Natural killer cell (primary cell): ENCODE measurements at regions of chr6 and their contacts with region 1.

Region 1: DNA sequence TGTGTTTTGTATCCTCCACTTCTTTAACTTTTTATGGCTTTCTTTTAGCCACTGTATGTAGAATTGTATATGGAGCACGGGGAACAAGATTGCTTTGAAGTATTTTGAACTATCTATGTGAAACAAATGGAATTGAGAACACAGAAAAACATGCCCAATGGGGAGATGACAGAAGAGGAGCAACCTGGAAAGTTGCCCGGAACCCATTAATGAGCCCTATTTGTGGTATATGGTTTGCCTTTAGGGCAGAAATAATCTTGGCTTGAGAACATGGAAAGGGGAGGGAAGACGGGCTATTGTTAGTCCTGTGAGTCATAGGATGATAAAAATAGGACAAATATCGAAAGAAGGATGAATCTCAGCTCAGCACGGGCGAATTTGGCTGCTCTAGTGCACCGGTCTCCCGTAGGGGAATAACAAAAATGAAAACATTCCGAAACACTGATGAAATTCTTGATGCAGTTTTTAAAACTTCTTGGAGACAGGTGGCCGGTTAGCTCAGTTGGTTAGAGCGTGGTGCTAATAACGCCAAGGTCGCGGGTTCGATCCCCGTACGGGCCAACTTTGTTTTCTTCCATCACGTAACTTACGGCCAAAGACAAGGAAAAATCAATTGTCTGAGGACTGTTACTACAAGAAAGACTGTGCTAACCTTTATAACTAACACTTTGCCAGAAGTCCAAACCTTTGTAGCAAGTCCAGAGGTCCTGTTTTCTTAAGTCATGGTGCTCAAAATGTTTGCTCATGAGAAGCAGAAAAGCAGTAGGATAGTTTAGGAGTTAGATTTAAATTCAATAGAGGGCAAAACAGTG is 15.7 kb downstream of the HMGN4 start:
- DNase-seq: peak; percentile 77 to 91
- ATAC-seq: peak; percentile 51 to 62 (median 61)
- H3K4me3 ChIP-seq: peak overlapping the region; percentile 71
- H3K4me3 Mint-ChIP-seq: no peak overlapping the region
- H3K27ac ChIP-seq: peak overlapping the region; percentile 65
- H3K27ac Mint-ChIP-seq: no peak overlapping the region
- H3K4me1 ChIP-seq: peaks cover 23% of the 10 kb centered on the region
- H3K4me1 Mint-ChIP-seq: peaks cover 24 to 25% of the 10 kb centered on the region in 2 donors
- H3K27me3 ChIP-seq: no peaks in the 10 kb centered on the region
- H3K27me3 Mint-ChIP-seq: no peaks in the 10 kb centered on the region
- CTCF ChIP-seq: no peak

Region 2: GRCh38 chr6:25981568-25982263 is 572.1 kb before region 1 on chr6:
- intact Hi-C with region 1: no loop called
- DNase-seq: no peak
- ATAC-seq: no peak
- H3K4me3 ChIP-seq: no peak overlapping the region
- H3K4me3 Mint-ChIP-seq: no peak overlapping the region
- H3K27ac ChIP-seq: no peak overlapping the region
- H3K27ac Mint-ChIP-seq: peak overlapping the region; percentile 18 to 72
- H3K4me1 ChIP-seq: no peaks in the 10 kb centered on the region
- H3K4me1 Mint-ChIP-seq: peaks cover 19 to 21% of the 10 kb centered on the region in 2 donors
- H3K27me3 ChIP-seq: no peaks in the 10 kb centered on the region
- H3K27me3 Mint-ChIP-seq: no peaks in the 10 kb centered on the region
- CTCF ChIP-seq: no peak

Region 3: DNA sequence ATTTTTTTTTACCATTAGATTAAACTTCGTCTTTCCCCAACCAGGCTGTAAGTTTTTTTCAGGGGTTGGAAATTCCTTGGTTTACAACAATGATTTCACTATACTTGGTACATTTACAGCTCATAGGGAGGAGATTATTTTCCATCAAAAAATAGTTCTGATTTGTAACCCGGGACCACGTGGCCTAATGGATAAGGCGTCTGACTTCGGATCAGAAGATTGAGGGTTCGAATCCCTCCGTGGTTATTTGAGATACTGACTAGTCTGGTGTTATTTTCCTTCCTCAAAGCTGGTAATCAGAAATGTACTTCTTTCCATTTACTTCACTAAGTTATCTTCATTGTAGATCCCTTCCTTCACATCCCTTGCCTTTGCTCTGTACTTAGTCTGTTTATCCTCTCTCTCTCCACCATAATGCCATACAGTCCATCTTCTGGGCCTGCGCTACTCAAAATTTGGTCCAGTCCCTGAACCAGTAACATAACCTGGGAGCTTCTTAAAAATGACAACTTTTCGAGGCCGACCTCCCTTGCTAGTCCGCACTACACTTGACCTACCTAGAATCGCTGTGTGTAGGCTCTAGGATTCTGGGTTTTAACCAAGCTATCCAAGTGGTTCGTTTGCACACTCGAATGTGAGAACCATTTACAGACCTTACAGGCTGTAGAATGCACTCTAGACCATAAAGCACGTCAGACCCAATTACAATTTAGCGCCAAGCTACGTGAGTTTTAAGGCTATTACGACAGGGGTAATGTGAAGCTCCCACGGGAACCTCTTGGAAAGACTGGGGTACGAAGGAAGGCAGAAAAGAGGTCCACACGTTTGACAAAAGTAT is 231.0 kb before region 1 on chr6:
- intact Hi-C with region 1: loop called (anchors 5 kb)
- DNase-seq: peak in 1 of 2 donors; percentile 85
- ATAC-seq: peak; percentile 72 to 76 (median 75)
- H3K4me3 ChIP-seq: peak overlapping the region; percentile 47
- H3K4me3 Mint-ChIP-seq: peak overlapping the region; percentile 68
- H3K27ac ChIP-seq: no peak overlapping the region
- H3K27ac Mint-ChIP-seq: peak overlapping the region; percentile 86 to 92
- H3K4me1 ChIP-seq: peaks cover 16% of the 10 kb centered on the region
- H3K4me1 Mint-ChIP-seq: peaks cover 25 to 27% of the 10 kb centered on the region in 2 donors
- H3K27me3 ChIP-seq: peaks cover 15% of the 10 kb centered on the region
- H3K27me3 Mint-ChIP-seq: peaks cover 32 to 38% of the 10 kb centered on the region in 2 donors
- CTCF ChIP-seq: no peak

Region 4: DNA sequence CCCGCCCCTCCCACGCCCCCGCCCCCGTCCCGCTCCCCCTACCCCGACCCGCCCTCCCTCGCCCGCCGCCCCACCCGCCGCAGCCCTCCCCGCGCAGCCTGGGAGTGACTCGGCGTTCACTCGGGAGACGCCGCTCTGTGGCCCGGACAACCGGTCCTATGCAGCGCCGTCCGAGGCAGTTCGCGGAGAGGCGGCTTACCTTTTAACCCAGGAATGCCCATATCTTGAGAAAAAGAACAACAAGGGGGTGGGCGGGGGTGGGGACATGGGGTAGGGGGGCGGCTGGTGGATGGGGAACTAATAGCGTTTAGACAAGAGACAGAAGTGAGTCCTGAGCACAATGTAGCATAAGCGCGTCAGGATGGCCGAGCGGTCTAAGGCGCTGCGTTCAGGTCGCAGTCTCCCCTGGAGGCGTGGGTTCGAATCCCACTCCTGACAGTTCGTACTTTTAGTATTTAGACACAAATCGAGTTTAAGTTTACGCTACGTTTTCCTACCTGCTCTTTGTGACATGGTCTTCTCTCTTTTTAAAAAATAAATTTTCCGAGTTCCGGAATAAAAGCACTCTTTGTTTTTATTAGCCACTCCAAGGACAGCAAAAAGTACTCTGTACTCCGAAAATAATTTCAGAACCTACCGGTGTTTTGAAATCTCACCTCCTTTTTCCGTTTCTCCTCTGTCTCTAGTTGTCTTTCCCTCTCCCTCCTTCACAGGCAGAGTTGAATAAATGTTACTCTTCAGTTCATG is 32.8 kb before region 1 on chr6:
- intact Hi-C with region 1: loop called (anchors 1 kb)
- DNase-seq: peak; percentile 84 to 94
- ATAC-seq: peak; percentile 70 to 88 (median 73)
- H3K4me3 ChIP-seq: peak overlapping the region; percentile 85
- H3K4me3 Mint-ChIP-seq: peak overlapping the region; percentile 89
- H3K27ac ChIP-seq: peak overlapping the region; percentile 91
- H3K27ac Mint-ChIP-seq: peak overlapping the region; percentile 89 to 96
- H3K4me1 ChIP-seq: peaks cover 13% of the 10 kb centered on the region
- H3K4me1 Mint-ChIP-seq: peaks cover 26 to 30% of the 10 kb centered on the region in 2 donors
- H3K27me3 ChIP-seq: no peaks in the 10 kb centered on the region
- H3K27me3 Mint-ChIP-seq: no peaks in the 10 kb centered on the region
- CTCF ChIP-seq: no peak

Region 5: DNA sequence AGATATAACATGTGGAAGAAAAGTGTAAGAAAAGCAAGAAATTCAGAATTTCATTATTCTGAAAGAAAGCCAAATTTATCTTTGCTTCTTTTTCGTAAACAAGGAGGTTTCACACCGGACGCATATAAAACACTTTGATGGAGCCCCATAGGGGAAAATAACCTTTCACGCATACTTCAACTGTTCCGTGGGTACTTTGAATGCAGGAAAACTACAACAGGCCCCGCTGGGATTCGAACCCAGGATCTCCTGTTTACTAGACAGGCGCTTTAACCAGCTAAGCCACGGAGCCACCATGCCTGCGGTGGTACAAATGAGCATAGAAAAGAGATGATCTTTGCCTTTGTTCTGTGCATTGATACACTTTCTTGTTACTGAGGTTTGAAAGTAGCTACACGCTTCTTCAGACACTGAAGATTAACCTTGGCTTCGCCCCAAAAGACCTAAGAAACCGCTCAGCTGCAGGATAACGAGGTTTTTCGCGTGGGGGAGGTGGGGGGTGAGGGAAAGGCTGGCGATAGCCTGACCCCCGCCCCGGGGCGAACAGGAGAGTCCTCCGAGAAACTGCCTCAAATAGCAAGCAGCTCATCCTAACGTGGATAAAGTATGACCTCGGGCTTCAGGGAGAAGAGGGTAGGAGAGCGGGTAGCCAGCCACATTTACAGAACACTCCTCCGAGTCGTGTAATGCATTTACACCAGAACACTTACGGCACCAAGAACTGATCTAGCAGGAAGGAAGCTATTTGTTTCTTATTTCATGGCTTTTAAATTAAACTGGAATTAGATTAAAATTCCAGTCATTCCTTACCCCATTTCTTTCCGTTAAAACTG is 20.9 kb before region 1 on chr6:
- intact Hi-C with region 1: loop called (anchors 1 kb)
- DNase-seq: peak; percentile 87 to 96
- ATAC-seq: peak; percentile 33 to 56 (median 39)
- H3K4me3 ChIP-seq: peak overlapping the region; percentile 79
- H3K4me3 Mint-ChIP-seq: peak overlapping the region; percentile 100
- H3K27ac ChIP-seq: peak overlapping the region; percentile 75
- H3K27ac Mint-ChIP-seq: peak overlapping the region; percentile 99
- H3K4me1 ChIP-seq: peaks cover 21% of the 10 kb centered on the region
- H3K4me1 Mint-ChIP-seq: peaks cover 39 to 53% of the 10 kb centered on the region in 2 donors
- H3K27me3 ChIP-seq: no peaks in the 10 kb centered on the region
- H3K27me3 Mint-ChIP-seq: peaks cover 5 to 7% of the 10 kb centered on the region in 2 donors
- CTCF ChIP-seq: no peak

Region 6: GRCh38 chr6:26568601-26569432 is 15.0 kb after region 1 on chr6:
- intact Hi-C with region 1: loop called (anchors 1 kb)
- DNase-seq: peak; percentile 99
- ATAC-seq: peak; percentile 76 to 82 (median 81)
- H3K4me3 ChIP-seq: peak overlapping the region; percentile 90
- H3K4me3 Mint-ChIP-seq: peak overlapping the region; percentile 97
- H3K27ac ChIP-seq: peak overlapping the region; percentile 66
- H3K27ac Mint-ChIP-seq: peak overlapping the region; percentile 99 to 100
- H3K4me1 ChIP-seq: peaks cover 25% of the 10 kb centered on the region
- H3K4me1 Mint-ChIP-seq: peaks cover 27 to 34% of the 10 kb centered on the region in 2 donors
- H3K27me3 ChIP-seq: no peaks in the 10 kb centered on the region
- H3K27me3 Mint-ChIP-seq: peaks cover 5 to 6% of the 10 kb centered on the region in 2 donors
- CTCF ChIP-seq: no peak